ENCODE measurements at regions of chr10 and their contacts with region 1.

Region 1: DNA sequence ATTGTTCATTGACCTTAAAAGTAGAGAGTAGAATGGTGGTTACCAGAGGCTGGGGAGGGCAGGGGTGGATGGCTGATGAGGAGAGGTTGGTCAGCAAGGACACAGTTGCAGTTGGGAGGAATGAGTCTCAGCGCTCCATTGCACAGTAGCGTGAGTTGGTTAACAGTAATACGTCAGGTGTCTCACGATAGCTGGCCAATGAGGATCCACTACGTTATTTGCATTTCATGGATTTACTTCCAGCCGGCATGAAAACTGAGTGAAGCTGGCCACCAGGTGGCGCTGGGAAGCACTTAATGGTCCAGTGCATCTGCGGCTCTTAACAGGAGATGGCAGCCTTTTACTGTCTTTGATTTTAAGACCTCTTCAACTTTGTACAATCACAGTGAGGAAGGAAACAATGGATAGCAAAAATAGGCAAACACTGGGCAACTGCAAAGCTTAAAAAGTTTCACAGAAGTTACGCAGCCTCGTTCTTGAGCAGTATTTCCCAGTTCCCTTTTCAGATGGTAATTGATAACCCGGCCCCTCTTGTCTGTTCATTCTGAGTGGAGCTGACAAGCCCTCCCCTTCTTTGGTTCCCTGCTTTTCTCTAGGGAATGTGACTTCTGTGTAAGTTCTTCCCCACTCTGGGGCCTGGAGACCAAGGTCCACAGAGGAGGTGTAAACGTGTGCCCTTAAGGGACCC is 23.7 kb downstream of the AKR1E2 start:
- DNase-seq: peak; percentile 95
- ATAC-seq: peak; percentile 95
- H3K4me3 Mint-ChIP-seq: no peak overlapping the region
- H3K27ac Mint-ChIP-seq: peak overlapping the region; percentile 55
- H3K4me1 Mint-ChIP-seq: peaks cover 11% of the 10 kb centered on the region
- H3K27me3 Mint-ChIP-seq: no peaks in the 10 kb centered on the region

Region 2: DNA sequence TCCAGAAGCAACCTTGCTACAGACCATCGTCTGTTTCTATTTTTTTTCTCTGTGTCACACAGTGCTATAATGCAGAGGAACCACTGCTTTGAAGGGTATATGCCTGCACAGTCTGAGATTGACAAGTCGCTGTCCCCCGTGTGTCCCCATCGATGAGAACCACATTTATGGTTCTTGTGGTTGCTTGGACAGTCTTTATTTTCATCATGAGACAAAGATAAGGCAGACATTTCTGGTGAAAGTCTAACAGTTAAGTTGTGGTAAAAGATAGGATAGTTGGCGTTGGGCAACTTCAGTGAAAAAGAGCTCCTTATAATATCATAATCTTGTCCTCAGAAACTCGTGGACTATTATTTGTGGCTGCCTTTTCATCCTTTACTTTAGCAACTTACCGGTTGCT is 30.0 kb before region 1 on chr10:
- CTCF ChIA-PET with region 1: interaction called, 29 read pairs
- POLR2A ChIA-PET with region 1: no interaction called
- intact Hi-C with region 1: loop called in 1 of 2 experiments (anchors 1 kb)
- DNase-seq: no peak
- ATAC-seq: no peak
- H3K4me3 Mint-ChIP-seq: no peak overlapping the region
- H3K27ac Mint-ChIP-seq: no peak overlapping the region
- H3K4me1 Mint-ChIP-seq: no peaks in the 10 kb centered on the region
- H3K27me3 Mint-ChIP-seq: peaks cover 6% of the 10 kb centered on the region

Region 3: GRCh38 chr10:4839401-4839800 is 10.3 kb before region 1 on chr10:
- CTCF ChIA-PET with region 1: interaction called, 46 read pairs
- POLR2A ChIA-PET with region 1: interaction called, 3 read pairs
- intact Hi-C with region 1: no loop called
- DNase-seq: no peak
- ATAC-seq: no peak
- H3K4me3 Mint-ChIP-seq: no peak overlapping the region
- H3K27ac Mint-ChIP-seq: no peak overlapping the region
- H3K4me1 Mint-ChIP-seq: peaks cover 24% of the 10 kb centered on the region
- H3K27me3 Mint-ChIP-seq: no peaks in the 10 kb centered on the region

Region 4: DNA sequence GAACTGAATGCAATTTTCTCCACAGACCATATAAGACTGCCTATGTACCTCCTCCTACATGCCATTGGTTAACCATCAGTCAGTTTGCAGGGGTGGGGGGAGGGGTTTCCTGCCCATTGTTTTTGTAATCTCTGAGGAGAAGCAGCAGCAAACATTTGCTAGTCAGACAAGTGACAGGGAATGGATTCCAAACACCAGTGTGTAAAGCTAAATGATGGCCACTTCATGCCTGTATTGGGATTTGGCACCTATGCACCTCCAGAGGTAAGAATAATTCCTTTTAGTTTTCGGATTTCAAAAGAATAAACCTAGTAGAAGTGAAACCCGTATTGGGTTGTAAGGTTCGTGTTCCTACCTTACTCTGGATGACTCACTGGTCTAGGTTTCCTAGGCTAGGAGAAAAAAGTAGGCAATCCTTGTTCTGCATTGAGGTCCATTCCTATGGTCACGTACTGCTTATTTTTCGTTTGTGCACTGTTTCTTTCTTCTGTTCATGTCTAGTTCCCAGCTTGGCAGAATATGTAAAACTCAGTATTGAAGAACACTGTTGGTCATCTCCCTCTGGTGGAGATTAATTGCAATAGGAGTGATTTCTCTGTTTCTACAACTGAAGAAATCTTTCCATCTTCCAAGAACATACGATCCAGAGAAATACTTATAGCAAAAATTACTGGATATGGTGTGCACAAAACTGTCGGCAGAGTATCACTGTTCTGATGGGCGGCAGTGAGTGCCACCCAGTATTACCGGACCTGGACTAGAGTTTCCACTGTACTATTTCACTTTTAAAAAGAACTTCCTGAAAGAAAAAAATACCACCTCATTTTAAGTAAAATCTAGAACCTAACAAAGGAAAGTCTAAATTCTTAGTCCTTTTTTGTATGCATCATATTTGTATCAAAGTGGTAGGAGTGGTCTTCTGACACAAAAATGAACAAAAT is 244.8 kb after region 1 on chr10 and contains the start of gene AKR1C3:
- CTCF ChIA-PET with region 1: interaction called, 16 read pairs
- POLR2A ChIA-PET with region 1: no interaction called
- intact Hi-C with region 1: loop called (anchors 1 to 10 kb)
- DNase-seq: no peak
- ATAC-seq: peak; percentile 55
- H3K4me3 Mint-ChIP-seq: peak within 1 kb of the TSS; percentile 39
- H3K27ac Mint-ChIP-seq: no peak within 1 kb of the TSS
- H3K4me1 Mint-ChIP-seq: peaks cover 8% of the 10 kb centered on the region
- H3K27me3 Mint-ChIP-seq: peaks cover 11% of the 10 kb centered on the region
- total RNA-seq, gene AKR1C3: 0.19 to 0.75 TPM

Region 5: GRCh38 chr10:5385224-5385623 is 535.5 kb after region 1 on chr10:
- CTCF ChIA-PET with region 1: interaction called, 8 read pairs
- POLR2A ChIA-PET with region 1: no interaction called
- intact Hi-C with region 1: loop called (anchors 1 kb)
- DNase-seq: no peak
- ATAC-seq: no peak
- H3K4me3 Mint-ChIP-seq: no peak overlapping the region
- H3K27ac Mint-ChIP-seq: no peak overlapping the region
- H3K4me1 Mint-ChIP-seq: no peaks in the 10 kb centered on the region
- H3K27me3 Mint-ChIP-seq: peaks cover 4% of the 10 kb centered on the region

Region 6: GRCh38 chr10:5623081-5623748 is 773.5 kb after region 1 on chr10:
- CTCF ChIA-PET with region 1: interaction called, 6 read pairs
- POLR2A ChIA-PET with region 1: no interaction called
- intact Hi-C with region 1: loop called in 1 of 2 experiments (anchors 10 kb)
- DNase-seq: peak; percentile 93
- ATAC-seq: peak; percentile 95
- H3K4me3 Mint-ChIP-seq: no peak overlapping the region
- H3K27ac Mint-ChIP-seq: no peak overlapping the region
- H3K4me1 Mint-ChIP-seq: peaks cover 2% of the 10 kb centered on the region
- H3K27me3 Mint-ChIP-seq: peaks cover 4% of the 10 kb centered on the region